ENCODE measurements at regions of chr19 and their contacts with region 1.

Region 1: DNA sequence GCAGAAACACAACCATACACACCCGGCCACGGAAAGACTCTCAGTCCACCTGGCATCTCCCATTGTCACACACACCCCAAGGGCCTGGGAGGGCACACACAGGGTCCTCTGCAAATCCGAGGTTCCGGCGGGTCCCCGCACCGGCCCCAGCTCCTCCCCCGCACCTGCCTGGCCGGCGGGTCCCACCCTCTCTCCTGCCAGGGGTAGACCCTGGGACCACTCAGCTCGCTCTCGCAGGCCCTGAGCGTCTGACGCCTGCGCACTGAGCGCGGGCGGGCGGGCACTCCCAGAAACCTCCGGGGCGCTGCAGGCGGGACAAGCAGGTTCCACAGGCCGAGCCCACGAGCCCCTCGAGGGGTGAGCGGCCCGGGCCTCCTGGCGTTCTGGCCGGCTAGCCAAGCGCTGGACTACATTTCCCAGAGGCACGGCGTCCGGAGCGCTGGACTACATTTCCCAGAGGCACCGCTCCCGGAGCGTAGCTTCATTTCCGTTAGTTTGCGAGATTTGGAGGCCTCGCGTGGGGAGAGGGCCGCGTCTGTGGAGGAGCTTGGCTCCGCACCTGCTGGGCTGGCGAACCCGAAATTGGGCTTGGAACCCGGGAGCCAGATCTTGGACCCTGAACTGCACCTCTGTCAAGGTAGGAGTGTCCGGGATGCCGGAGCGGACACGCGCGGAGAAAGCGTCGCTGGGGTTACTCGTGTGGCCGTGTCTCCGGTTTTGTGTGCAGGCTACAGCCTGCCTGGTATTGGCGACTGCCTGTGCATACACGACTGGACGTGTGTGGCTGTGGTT is at the start of gene ZNF420:
- DNase-seq: peak; percentile 78 to 96 (median 89)
- ATAC-seq: peak; percentile 88
- H3K4me3 ChIP-seq: peak within 1 kb of the TSS; percentile 60 to 71
- H3K4me3 Mint-ChIP-seq: peak within 1 kb of the TSS; percentile 89
- H3K27ac ChIP-seq: peak within 1 kb of the TSS; percentile 56 to 82
- H3K27ac Mint-ChIP-seq: peak within 1 kb of the TSS; percentile 92
- H3K4me1 ChIP-seq: peaks cover 9% of the 10 kb centered on the region
- H3K4me1 Mint-ChIP-seq: peaks cover 34% of the 10 kb centered on the region
- H3K27me3 ChIP-seq: no peaks in the 10 kb centered on the region
- H3K27me3 Mint-ChIP-seq: no peaks in the 10 kb centered on the region
- CTCF ChIP-seq: no peak
- total RNA-seq, gene ZNF420: 7.0 to 8.9 TPM

Region 2: GRCh38 chr19:36528194-36528920 is 549.8 kb before region 1 on chr19 and contains the start of gene ZNF260:
- CTCF ChIA-PET with region 1: no interaction called
- POLR2A ChIA-PET with region 1: no interaction called
- intact Hi-C with region 1: loop called in 1 of 2 experiments (anchors 1 kb)
- DNase-seq: peak; percentile 77 to 96 (median 92)
- ATAC-seq: peak; percentile 90
- H3K4me3 ChIP-seq: peak within 1 kb of the TSS; percentile 64 to 85
- H3K4me3 Mint-ChIP-seq: peak within 1 kb of the TSS; percentile 99
- H3K27ac ChIP-seq: peak within 1 kb of the TSS; percentile 52 to 84
- H3K27ac Mint-ChIP-seq: peak within 1 kb of the TSS; percentile 96
- H3K4me1 ChIP-seq: peaks cover 21% of the 10 kb centered on the region
- H3K4me1 Mint-ChIP-seq: peaks cover 28% of the 10 kb centered on the region
- H3K27me3 ChIP-seq: no peaks in the 10 kb centered on the region
- H3K27me3 Mint-ChIP-seq: no peaks in the 10 kb centered on the region
- CTCF ChIP-seq: no peak
- total RNA-seq, gene ZNF260: 2.8 to 4.6 TPM

Region 3: DNA sequence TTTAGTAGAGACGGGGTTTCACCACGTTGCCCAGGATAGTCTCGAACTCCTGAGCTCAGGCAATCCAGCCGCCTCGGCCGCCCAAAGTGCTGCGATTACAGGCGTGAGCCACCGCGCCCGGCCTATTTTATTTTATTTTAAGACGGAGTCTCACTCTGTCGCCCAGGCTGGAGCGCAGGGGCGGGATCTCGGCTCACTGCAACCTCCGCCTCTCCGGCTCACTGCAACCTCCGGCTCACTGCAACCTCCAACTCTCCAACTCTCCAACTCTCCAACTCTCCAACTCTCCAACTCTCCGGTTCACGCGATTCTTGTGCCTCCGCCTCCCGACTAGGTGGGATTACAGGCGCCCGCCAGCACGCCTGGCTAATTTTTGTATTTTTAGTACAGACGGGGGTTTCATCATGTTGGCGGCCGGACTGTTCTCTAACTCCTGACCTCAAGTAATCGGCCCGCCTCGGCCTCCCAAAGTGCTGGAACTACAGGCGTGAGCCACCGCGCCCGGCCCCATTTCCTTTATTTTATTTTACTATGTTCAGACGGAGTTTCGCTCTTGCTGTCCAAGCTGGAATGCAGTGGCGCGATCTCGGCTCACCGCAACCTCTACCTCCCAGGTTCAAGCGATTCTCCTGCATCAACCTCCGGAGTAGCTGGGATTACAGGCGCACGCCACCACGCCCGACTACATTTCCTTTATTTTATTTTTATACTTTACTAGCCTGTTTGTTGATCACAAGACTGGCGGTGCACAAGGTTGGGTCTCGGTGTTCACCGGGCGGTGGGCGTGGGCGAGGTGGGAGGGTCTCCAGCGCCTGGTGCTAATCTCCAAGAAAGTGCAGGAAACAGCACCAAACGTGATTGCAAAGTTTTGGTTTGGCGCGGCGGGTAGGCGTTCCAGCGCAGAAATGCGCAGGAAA is 281.8 kb before region 1 on chr19:
- CTCF ChIA-PET with region 1: no interaction called
- POLR2A ChIA-PET with region 1: no interaction called
- intact Hi-C with region 1: loop called (anchors 1 kb)
- DNase-seq: no peak
- ATAC-seq: no peak
- H3K4me3 ChIP-seq: peak overlapping the region; percentile 92 to 97
- H3K4me3 Mint-ChIP-seq: peak overlapping the region; percentile 97
- H3K27ac ChIP-seq: peak overlapping the region; percentile 76 to 90
- H3K27ac Mint-ChIP-seq: peak overlapping the region; percentile 98
- H3K4me1 ChIP-seq: peaks cover 3% of the 10 kb centered on the region
- H3K4me1 Mint-ChIP-seq: peaks cover 21% of the 10 kb centered on the region
- H3K27me3 ChIP-seq: no peaks in the 10 kb centered on the region
- H3K27me3 Mint-ChIP-seq: peaks cover 6% of the 10 kb centered on the region
- CTCF ChIP-seq: no peak

Region 4: GRCh38 chr19:36973021-36973843 is 104.9 kb before region 1 on chr19:
- CTCF ChIA-PET with region 1: no interaction called
- POLR2A ChIA-PET with region 1: no interaction called
- intact Hi-C with region 1: loop called (anchors 1 kb)
- DNase-seq: peak; percentile 49 to 92 (median 77)
- ATAC-seq: peak; percentile 90
- H3K4me3 ChIP-seq: peak overlapping the region; percentile 59 to 100
- H3K4me3 Mint-ChIP-seq: peak overlapping the region; percentile 90
- H3K27ac ChIP-seq: peak overlapping the region; percentile 53 to 66
- H3K27ac Mint-ChIP-seq: peak overlapping the region; percentile 88
- H3K4me1 ChIP-seq: peaks cover 15% of the 10 kb centered on the region
- H3K4me1 Mint-ChIP-seq: peaks cover 24% of the 10 kb centered on the region
- H3K27me3 ChIP-seq: no peaks in the 10 kb centered on the region
- H3K27me3 Mint-ChIP-seq: no peaks in the 10 kb centered on the region
- CTCF ChIP-seq: no peak

Region 5: GRCh38 chr19:37334179-37335071 is 256.3 kb after region 1 on chr19:
- CTCF ChIA-PET with region 1: no interaction called
- POLR2A ChIA-PET with region 1: no interaction called
- intact Hi-C with region 1: loop called in 1 of 2 experiments (anchors 5 kb)
- DNase-seq: peak; percentile 75 to 96 (median 87)
- ATAC-seq: peak; percentile 97
- H3K4me3 ChIP-seq: peak overlapping the region; percentile 46 to 74
- H3K4me3 Mint-ChIP-seq: peak overlapping the region; percentile 96
- H3K27ac ChIP-seq: peak overlapping the region; percentile 46 to 87
- H3K27ac Mint-ChIP-seq: peak overlapping the region; percentile 95
- H3K4me1 ChIP-seq: peaks cover 10% of the 10 kb centered on the region
- H3K4me1 Mint-ChIP-seq: peaks cover 47% of the 10 kb centered on the region
- H3K27me3 ChIP-seq: no peaks in the 10 kb centered on the region
- H3K27me3 Mint-ChIP-seq: no peaks in the 10 kb centered on the region
- CTCF ChIP-seq: no peak